ENCODE measurements at regions of chr2 and their contacts with region 1.

Region 1: GRCh38 chr2:101831351-101831865 is 133.9 kb downstream of the MAP4K4 start:
- DNase-seq: peak; percentile 80 to 87
- ATAC-seq: peak; percentile 94
- H3K4me3 ChIP-seq: no peak overlapping the region
- H3K27ac ChIP-seq: peak overlapping the region in 1 of 2 donors; percentile 59
- H3K4me1 ChIP-seq: peaks cover 3 to 7% of the 10 kb centered on the region in 2 donors
- H3K27me3 ChIP-seq: no peaks in the 10 kb centered on the region

Region 2: GRCh38 chr2:101341901-101342624 is 489.3 kb before region 1 on chr2:
- intact Hi-C with region 1: loop called in 1 of 2 experiments (anchors 10 kb)
- DNase-seq: peak; percentile 81 to 91
- ATAC-seq: peak; percentile 69
- H3K4me3 ChIP-seq: no peak overlapping the region
- H3K27ac ChIP-seq: no peak overlapping the region
- H3K4me1 ChIP-seq: no peaks in the 10 kb centered on the region
- H3K27me3 ChIP-seq: no peaks in the 10 kb centered on the region

Region 3: GRCh38 chr2:101419096-101419663 is 412.2 kb before region 1 on chr2:
- intact Hi-C with region 1: loop called (anchors 1 to 5 kb)
- DNase-seq: no peak
- ATAC-seq: peak; percentile 83
- H3K4me3 ChIP-seq: no peak overlapping the region
- H3K27ac ChIP-seq: no peak overlapping the region
- H3K4me1 ChIP-seq: no peaks in the 10 kb centered on the region
- H3K27me3 ChIP-seq: no peaks in the 10 kb centered on the region

Region 4: DNA sequence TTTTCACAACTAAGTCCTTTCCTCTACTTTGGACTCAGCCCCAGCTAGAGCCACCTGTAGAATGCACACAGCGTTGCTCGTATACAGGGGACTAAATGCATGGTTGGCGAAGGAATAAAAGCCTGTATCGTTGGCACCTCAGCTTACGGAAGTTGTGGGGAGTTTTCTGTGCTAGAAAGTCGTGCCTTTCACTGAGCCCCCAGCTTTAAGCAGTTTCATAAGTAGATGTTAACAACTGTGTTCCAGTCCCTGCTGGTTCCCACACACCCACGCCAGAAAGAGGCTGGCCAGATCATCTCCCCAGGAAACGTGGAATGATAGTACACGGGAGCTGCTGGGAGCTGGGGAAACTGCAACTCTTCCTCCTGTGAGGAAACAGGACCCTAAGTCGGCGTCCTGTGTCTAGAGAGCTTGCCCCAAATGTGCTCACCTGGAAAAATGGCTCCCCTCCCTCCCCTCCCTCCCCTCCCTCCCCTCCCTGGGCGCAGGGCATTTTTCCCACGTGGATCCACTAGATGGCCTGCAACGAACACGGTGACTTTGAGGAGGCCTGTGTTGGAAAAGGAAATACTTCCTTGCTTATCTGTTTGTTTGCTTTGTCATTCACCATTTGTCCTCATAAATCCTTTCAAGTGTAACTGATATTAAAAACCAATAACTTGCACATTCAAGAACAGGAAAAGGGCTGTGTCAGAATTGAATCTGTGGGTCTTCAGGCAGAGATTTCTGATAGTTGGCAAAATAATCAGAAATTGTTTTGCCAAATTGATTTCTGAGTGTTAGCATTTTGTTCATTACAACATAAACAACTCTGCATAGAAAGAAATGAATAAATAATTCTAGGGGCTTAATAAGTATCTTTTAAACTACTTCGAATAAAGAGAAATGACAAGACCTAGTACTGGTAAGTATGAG is 312.6 kb before region 1 on chr2:
- intact Hi-C with region 1: loop called (anchors 2 to 5 kb)
- DNase-seq: no peak
- ATAC-seq: no peak
- H3K4me3 ChIP-seq: no peak overlapping the region
- H3K27ac ChIP-seq: no peak overlapping the region
- H3K4me1 ChIP-seq: no peaks in the 10 kb centered on the region
- H3K27me3 ChIP-seq: no peaks in the 10 kb centered on the region

Region 5: GRCh38 chr2:101781326-101781725 is 50.1 kb before region 1 on chr2:
- intact Hi-C with region 1: no loop called
- DNase-seq: no peak
- ATAC-seq: no peak
- H3K4me3 ChIP-seq: no peak overlapping the region
- H3K27ac ChIP-seq: no peak overlapping the region
- H3K4me1 ChIP-seq: peaks cover 2 to 6% of the 10 kb centered on the region in 2 donors
- H3K27me3 ChIP-seq: no peaks in the 10 kb centered on the region

Region 6: GRCh38 chr2:101900375-101900774 is 69.0 kb after region 1 on chr2:
- intact Hi-C with region 1: no loop called
- DNase-seq: no peak
- ATAC-seq: no peak
- H3K4me3 ChIP-seq: no peak overlapping the region
- H3K27ac ChIP-seq: no peak overlapping the region
- H3K4me1 ChIP-seq: no peaks in the 10 kb centered on the region
- H3K27me3 ChIP-seq: no peaks in the 10 kb centered on the region

Measured in aorta (tissue), 5 donors.